Caco-2 (cell line): ENCODE measurements at regions of chr6 and their contacts with region 1.

Region 1: DNA sequence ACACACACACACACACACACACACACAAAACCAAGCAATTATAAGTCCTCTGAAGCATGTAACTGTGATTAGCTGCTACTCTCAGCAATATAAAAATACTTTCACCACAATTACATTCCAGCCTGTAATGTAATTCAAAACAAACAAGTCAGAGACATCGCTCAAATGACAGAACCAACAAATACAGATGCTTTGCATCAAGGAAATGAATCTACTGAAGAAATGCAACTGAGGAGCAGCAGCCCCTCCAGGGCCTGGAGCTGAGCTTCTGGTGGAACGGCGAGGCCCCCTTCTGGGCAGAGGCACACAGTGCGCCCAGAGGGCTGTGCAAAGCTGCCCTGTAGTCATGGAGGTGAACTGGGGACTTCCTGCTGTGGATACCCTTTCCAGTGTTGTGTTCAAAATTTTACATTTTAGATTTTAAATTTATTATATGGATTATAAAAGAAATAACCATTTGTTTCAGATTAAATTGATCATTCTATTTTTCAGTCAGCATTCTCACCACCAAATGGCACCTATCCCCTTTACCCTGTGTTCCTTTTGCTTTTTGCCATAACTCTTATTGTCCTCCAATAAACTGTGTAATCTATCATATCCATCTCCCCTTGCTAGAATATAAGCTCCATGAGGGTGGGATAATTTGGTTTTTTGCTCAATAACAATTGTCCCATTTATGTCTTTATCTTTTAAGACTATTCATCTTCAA is 23.2 kb downstream of the ADAT2 start:
- DNase-seq: peak; percentile 68 to 78
- H3K4me3 ChIP-seq: no peak overlapping the region
- H3K4me3 Mint-ChIP-seq: no peak overlapping the region
- H3K27ac Mint-ChIP-seq: no peak overlapping the region
- H3K4me1 ChIP-seq: no peaks in the 10 kb centered on the region
- H3K4me1 Mint-ChIP-seq: no peaks in the 10 kb centered on the region
- H3K27me3 ChIP-seq: no peaks in the 10 kb centered on the region
- H3K27me3 Mint-ChIP-seq: no peaks in the 10 kb centered on the region
- CTCF ChIP-seq: peak; percentile 90 to 99

Region 2: DNA sequence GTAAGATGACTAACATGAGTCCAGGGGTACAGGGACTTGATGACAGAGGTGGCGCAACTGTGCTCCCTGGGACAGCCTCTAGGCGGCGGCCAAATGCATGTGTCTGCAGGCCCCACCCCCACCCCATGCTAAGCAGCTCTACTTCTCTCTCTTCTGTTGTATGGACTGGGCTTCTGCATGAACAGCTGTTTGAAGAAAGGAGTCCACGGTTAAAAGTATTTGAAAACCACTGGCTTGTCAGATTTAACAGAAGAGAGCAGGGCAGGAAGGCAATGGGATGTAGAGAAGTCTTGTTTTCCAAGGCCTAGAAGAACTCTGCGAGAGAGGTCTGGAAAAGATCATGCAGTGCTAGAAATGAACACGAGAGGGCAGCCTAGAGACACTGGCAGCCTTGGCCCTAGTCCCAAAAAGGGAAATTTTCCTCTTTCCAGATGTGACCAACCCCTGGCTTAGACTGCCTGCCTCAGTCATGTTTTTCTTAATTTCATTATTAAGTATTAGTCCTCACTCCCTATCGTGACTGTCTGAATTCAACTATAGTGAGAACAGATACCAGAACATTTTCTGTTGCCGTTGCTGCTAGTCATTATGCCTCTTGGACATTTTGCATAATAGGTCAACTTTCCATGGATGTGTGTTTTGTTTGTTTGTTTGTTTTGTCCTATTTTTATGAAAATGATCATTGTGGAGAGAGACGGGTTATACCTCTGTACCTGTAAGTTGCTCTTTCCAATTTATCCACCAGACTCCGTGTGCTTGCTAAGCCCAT is 860.5 kb before region 1 on chr6:
- CTCF ChIA-PET with region 1: no interaction called
- POLR2A ChIA-PET with region 1: no interaction called
- intact Hi-C with region 1: loop called (anchors 2 kb)
- DNase-seq: peak; percentile 53 to 79
- H3K4me3 ChIP-seq: no peak overlapping the region
- H3K4me3 Mint-ChIP-seq: no peak overlapping the region
- H3K27ac Mint-ChIP-seq: no peak overlapping the region
- H3K4me1 ChIP-seq: no peaks in the 10 kb centered on the region
- H3K4me1 Mint-ChIP-seq: no peaks in the 10 kb centered on the region
- H3K27me3 ChIP-seq: no peaks in the 10 kb centered on the region
- H3K27me3 Mint-ChIP-seq: peaks cover 6% of the 10 kb centered on the region
- CTCF ChIP-seq: peak; percentile 77 to 79

Region 3: DNA sequence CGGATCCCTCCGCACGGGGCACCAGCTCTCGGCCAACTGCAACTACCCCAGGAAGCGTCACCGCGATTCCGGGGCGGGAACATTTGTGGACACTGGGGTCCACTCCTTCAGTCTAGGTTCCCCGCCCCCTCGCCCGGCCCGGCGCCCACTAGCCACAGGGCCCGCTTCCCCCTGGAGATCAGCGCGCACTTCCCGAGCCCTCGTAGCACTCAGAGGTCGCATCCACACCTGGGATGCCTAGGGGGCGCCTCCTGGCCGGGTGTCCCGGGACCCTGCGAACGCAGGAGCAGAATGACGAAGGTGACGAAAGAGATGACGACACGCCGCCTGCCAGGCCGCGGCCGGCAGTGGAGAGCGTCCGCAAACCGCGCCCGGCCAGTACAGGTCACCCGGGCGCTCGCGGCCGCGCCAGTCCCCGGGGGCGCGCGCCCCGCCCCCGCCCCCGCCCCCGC is 366.9 kb before region 1 on chr6:
- CTCF ChIA-PET with region 1: no interaction called
- POLR2A ChIA-PET with region 1: no interaction called
- intact Hi-C with region 1: loop called (anchors 10 kb)
- DNase-seq: peak; percentile 85 to 88
- H3K4me3 ChIP-seq: peak overlapping the region; percentile 85
- H3K4me3 Mint-ChIP-seq: peak overlapping the region; percentile 94
- H3K27ac Mint-ChIP-seq: peak overlapping the region; percentile 96
- H3K4me1 ChIP-seq: peaks cover 18% of the 10 kb centered on the region
- H3K4me1 Mint-ChIP-seq: peaks cover 8% of the 10 kb centered on the region
- H3K27me3 ChIP-seq: no peaks in the 10 kb centered on the region
- H3K27me3 Mint-ChIP-seq: no peaks in the 10 kb centered on the region
- CTCF ChIP-seq: peak in 1 of 2 experiments; percentile 35

Region 4: DNA sequence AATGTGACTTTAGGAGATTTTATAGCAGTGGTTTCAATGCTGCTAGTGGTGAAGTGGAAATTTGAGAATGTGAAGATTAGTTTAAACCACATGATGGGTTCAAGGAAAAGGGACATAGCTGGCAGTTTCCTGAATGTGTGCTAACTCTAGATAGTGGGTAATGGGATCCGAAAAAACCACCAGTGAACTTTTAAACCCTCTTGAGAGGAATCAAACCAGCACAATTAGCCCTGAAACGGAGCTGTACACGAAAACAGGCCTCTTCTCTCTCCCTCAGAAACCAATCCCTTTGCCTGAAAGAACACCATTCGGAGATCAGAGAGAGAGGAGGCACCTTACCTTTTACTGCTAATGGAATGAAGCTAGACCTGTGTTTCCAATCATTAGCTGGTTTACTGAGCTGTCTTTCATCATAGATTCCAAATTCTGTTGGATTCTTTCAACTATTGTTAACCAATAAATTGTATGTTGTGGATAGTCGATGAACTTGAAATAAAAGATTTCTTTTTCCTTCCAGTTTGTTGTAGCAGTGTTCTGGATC is 262.6 kb before region 1 on chr6:
- CTCF ChIA-PET with region 1: no interaction called
- POLR2A ChIA-PET with region 1: no interaction called
- intact Hi-C with region 1: no loop called
- DNase-seq: no peak
- H3K4me3 ChIP-seq: no peak overlapping the region
- H3K4me3 Mint-ChIP-seq: no peak overlapping the region
- H3K27ac Mint-ChIP-seq: no peak overlapping the region
- H3K4me1 ChIP-seq: peaks cover 11% of the 10 kb centered on the region; the same call in 1 of the 2 replicates
- H3K4me1 Mint-ChIP-seq: peaks cover 7% of the 10 kb centered on the region
- H3K27me3 ChIP-seq: no peaks in the 10 kb centered on the region
- H3K27me3 Mint-ChIP-seq: no peaks in the 10 kb centered on the region
- CTCF ChIP-seq: no peak

Region 5: DNA sequence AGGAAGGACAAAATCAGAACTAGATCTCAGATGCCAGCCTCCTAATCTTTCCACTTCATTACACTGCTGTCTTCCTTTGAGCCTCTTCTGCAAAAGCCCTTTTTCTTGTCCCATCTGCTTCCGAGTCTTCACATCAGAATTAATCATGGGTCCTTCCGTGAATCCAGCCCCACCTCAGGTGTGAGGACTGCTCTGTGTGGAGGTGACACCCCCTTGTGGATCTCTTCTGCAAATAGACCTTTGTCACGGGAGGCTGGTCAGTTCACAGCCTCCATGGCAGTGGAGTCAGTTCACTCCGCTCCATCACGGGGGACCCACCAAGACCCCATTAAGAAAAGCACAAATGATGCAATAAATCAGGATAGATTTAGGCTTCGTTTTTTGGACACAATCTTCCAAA is 147.9 kb before region 1 on chr6:
- CTCF ChIA-PET with region 1: no interaction called
- POLR2A ChIA-PET with region 1: no interaction called
- intact Hi-C with region 1: loop called (anchors 1 kb)
- DNase-seq: peak; percentile 54 to 62
- H3K4me3 ChIP-seq: no peak overlapping the region
- H3K4me3 Mint-ChIP-seq: no peak overlapping the region
- H3K27ac Mint-ChIP-seq: no peak overlapping the region
- H3K4me1 ChIP-seq: no peaks in the 10 kb centered on the region
- H3K4me1 Mint-ChIP-seq: peaks cover 7% of the 10 kb centered on the region
- H3K27me3 ChIP-seq: no peaks in the 10 kb centered on the region
- H3K27me3 Mint-ChIP-seq: no peaks in the 10 kb centered on the region
- CTCF ChIP-seq: peak; percentile 55 to 58

Region 6: GRCh38 chr6:143374014-143374413 is 53.2 kb before region 1 on chr6:
- CTCF ChIA-PET with region 1: no interaction called
- POLR2A ChIA-PET with region 1: no interaction called
- intact Hi-C with region 1: loop called (anchors 5 kb)
- DNase-seq: no peak
- H3K4me3 ChIP-seq: no peak overlapping the region
- H3K4me3 Mint-ChIP-seq: no peak overlapping the region
- H3K27ac Mint-ChIP-seq: no peak overlapping the region
- H3K4me1 ChIP-seq: no peaks in the 10 kb centered on the region
- H3K4me1 Mint-ChIP-seq: no peaks in the 10 kb centered on the region
- H3K27me3 ChIP-seq: no peaks in the 10 kb centered on the region
- H3K27me3 Mint-ChIP-seq: no peaks in the 10 kb centered on the region
- CTCF ChIP-seq: no peak